ENCODE measurements at regions of chr4 and their contacts with region 1.

Region 1: DNA sequence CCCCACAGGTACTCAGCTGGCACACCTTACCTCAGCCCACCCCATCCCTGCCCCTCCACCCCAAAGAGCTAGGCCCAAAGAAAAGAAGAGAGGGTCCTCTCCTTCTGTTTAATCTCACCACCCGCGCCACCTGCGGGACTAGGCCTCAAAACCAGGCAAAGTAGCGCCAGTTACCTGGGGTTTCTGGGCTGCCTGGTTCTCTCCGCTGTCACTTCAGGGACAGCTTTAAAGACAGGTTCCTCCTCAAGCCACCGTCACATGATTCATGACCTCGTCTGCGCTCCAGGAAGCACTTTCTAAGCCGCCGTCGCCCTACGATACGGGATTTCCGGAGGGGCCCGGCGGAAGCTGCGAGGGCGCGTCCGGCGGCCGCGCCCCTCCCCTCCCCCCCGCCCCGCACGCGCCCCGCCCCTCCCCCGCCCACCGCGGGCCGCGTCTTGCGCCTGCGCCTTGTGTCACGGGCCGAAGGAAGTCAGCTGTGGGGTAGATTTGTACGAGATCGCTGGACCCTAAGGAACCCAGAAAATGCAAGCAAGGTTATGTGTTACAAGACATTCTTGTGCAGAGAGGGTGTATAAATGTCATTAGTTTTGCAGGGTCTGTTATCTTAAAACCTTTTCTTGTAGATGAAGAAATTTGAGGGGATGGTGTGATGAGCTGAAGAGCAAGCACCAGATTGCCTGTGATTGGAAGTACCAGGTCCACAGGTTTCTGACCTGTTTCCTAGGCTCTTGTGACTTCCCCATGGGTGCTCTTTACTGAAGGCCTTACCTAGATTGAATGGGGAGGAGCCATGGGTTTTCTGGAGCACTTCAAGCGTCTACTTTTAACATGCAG is at the start of gene LAMTOR3:
- DNase-seq: peak; percentile 90 to 95
- ATAC-seq: peak; percentile 99
- total RNA-seq, gene LAMTOR3: 51.2 to 70.9 TPM

Region 2: GRCh38 chr4:98851806-98852205 is 1042.6 kb before region 1 on chr4:
- intact Hi-C with region 1: no loop called
- DNase-seq: no peak
- ATAC-seq: no peak

Region 3: DNA sequence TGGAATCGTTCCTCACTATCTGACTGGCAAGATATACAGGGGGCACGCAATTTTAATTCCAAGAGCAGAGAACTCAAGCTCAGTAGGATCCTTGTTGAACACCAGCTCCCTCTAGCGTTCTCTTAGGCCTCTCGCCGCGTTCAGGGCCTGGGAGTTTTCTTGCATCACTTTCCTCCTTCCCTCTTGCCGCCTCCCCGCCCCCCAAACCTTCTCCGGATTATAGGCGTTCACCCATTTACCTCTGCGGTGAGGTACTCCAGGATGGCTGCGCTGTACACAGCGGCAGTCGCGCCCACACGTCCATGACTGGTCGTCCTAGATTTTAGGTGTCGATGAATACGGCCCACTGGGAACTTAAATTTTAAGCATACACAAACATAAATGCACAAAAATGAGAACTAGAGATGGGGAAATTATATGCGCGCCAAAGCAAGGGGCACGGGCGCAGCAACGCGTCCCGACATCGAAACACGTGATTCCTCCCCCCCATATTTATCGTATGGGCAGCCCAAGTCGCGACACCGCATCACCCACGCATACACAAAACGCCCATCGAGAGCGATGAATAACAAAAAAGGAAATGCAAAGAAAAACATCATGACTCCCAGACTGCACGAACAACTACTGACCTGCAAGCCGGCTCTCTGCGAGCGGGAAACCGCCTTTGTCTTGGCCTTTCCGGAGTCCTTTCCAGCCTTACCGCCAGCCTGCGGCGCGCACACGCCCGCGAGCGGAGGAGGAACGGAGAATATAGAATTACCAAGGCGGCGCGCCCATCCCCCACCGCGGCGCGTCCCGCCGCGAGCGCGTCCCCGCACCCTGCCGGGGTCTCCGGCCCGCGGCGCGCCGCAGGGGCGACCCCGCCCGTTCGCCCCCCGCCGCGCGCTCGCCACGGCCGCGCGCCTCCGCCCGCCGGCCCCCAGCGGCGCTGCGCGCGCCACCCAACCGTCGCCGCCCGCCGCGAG is 54.9 kb after region 1 on chr4:
- intact Hi-C with region 1: loop called in 1 of 2 experiments (anchors 5 kb)
- DNase-seq: peak; percentile 92 to 95
- ATAC-seq: peak; percentile 44

Region 4: GRCh38 chr4:100076743-100077142 is 182.4 kb after region 1 on chr4:
- intact Hi-C with region 1: no loop called
- DNase-seq: no peak
- ATAC-seq: no peak